H1 (cell line): ENCODE measurements at regions of chr6 and their contacts with region 1.

Region 1: DNA sequence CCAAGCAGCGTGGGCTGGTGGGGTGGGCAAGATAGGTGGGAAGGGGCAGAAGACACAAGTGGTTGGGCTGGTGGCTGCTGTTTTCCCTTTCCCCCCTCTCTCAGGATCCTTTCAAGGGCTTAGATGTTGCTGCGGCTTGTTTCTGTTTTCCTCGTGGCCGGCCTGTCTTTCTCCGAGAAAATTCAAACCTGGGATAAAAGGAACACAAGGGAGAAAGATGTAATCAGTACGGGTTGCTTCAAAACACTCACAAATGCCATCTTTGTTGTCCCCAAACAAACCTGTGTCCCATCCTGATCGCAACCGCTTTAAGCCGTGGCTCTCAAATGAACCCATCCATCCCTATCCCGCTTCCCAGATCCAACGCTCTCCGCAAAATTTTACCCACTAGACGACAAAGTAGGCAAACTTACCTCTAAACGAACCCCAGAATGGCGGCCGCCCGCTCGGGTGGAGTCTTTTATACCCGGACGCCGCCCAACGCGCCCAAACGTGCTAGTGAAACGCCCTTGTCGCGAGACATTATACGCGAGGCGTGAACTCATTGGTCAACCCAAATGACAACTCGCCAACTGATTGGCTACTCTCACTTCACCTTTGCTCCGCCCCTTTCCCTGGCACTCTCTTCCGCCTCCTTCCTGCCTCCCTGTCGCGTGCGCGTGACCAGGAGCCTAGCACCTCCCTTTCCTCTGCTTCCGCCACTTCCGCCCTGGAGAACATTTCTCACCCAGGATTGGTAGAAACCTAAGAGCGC is at the start of gene PPP1R10:
- DNase-seq: peak; percentile 99
- H3K4me3 ChIP-seq: peak within 1 kb of the TSS; percentile 90 to 97 (median 96)
- H3K27ac ChIP-seq: peak within 1 kb of the TSS; percentile 99
- H3K4me1 ChIP-seq: peaks cover 0 to 6% (median 4%) of the 10 kb centered on the region in 4 experiments; a peak in 4 of 7 replicates
- H3K27me3 ChIP-seq: no peaks in the 10 kb centered on the region
- CTCF ChIP-seq: no peak
- EP300 ChIP-seq: peak in 1 of 2 experiments; percentile 2; a peak in 1 of 3 replicates
- POLR2A ChIP-seq: peak; percentile 98 to 100
- RAD21 ChIP-seq: no peak
- total RNA-seq, gene PPP1R10: 78.9 and 89.1 TPM in 2 replicates

Region 2: GRCh38 chr6:30470968-30471367 is 146.0 kb before region 1 on chr6:
- CTCF ChIA-PET with region 1: no interaction called
- POLR2A ChIA-PET with region 1: no interaction called
- DNase-seq: no peak
- H3K4me3 ChIP-seq: no peak overlapping the region
- H3K27ac ChIP-seq: no peak overlapping the region
- H3K4me1 ChIP-seq: no peaks in the 10 kb centered on the region
- H3K27me3 ChIP-seq: peaks cover 8 to 21% (median 19%) of the 10 kb centered on the region in 4 experiments
- CTCF ChIP-seq: no peak
- EP300 ChIP-seq: no peak
- POLR2A ChIP-seq: no peak
- RAD21 ChIP-seq: no peak

Region 3: DNA sequence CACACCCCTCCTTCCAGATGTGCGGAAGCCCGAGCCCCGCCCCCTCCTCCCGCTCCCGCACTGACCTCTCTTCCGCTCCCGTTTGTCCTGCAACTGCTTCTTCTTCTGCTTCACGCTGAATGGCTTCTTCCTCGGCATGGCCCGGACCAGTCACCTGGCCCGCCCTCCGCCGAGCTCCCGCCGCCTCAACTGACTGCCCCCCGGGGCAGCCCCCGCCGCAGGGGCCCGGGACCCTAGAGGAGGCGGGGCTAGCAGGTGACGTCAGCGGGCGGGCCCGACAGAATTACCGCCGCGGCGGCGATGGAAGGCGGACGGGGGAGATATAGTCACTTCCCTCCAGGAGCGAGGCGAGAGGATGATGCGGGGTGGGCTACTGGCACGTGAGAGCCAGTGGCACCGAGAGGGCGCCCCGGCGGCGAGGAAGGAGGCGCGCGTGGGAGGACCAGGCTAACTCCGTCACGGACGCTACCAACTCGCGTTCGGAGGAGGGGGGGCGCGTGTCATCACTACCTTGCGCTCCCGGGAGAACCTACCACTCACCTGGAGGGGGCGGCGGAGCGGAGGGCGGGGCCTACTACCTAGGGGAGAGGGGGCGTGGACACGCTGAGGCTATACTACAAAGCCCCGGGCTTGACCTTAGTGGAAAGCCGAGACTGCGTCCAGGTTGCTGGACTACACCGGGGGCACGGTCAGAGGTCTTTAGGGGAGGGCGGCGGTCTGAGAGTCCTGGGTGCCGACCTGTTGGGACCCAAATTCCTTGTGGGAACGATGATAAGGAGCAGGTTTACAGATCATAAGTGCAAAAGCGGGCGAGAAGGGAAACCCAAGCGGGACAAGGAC is 60.7 kb before region 1 on chr6 and contains the start of gene GNL1:
- CTCF ChIA-PET with region 1: no interaction called
- POLR2A ChIA-PET with region 1: interaction called, 43 read pairs
- DNase-seq: peak; percentile 90 to 98
- H3K4me3 ChIP-seq: peak within 1 kb of the TSS; percentile 76 to 91 (median 89)
- H3K27ac ChIP-seq: peak within 1 kb of the TSS; percentile 93
- H3K4me1 ChIP-seq: peaks cover 0 to 3% (median 1%) of the 10 kb centered on the region in 4 experiments; a peak in 1 of 7 replicates
- H3K27me3 ChIP-seq: no peaks in the 10 kb centered on the region
- CTCF ChIP-seq: no peak
- EP300 ChIP-seq: peak in 1 of 2 experiments; percentile 99; a peak in 2 of 3 replicates
- POLR2A ChIP-seq: no peak
- RAD21 ChIP-seq: no peak
- total RNA-seq, gene GNL1: 67.8 and 75.4 TPM in 2 replicates

Region 4: GRCh38 chr6:30578051-30578450 is 38.9 kb before region 1 on chr6:
- CTCF ChIA-PET with region 1: interaction called, 3 read pairs
- POLR2A ChIA-PET with region 1: interaction called, 36 read pairs
- DNase-seq: no peak
- H3K4me3 ChIP-seq: no peak overlapping the region
- H3K27ac ChIP-seq: no peak overlapping the region
- H3K4me1 ChIP-seq: no peaks in the 10 kb centered on the region
- H3K27me3 ChIP-seq: no peaks in the 10 kb centered on the region
- CTCF ChIP-seq: no peak
- EP300 ChIP-seq: no peak
- POLR2A ChIP-seq: no peak
- RAD21 ChIP-seq: no peak

Region 5: DNA sequence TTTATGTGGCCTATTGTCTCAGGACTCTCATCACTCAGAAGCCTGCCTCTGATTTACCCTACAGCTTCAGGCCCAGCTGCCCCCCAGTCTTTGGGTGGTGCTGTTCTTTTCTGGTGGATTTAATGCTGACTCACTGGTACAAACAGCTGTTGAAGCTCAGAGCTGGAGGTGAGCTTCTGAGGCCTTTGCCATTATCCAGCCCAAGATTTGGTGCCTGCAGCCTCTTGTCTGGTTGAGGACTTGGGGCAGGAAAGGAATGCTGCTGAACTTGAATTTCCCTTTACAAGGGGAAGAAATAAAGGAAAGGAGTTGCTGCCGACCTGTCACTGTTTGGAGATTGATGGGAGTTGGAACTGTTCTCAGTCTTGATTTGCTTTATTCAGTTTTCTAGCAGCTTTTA is 26.0 kb before region 1 on chr6:
- CTCF ChIA-PET with region 1: interaction called, 17 read pairs
- POLR2A ChIA-PET with region 1: interaction called, 443 read pairs
- DNase-seq: no peak
- H3K4me3 ChIP-seq: no peak overlapping the region
- H3K27ac ChIP-seq: no peak overlapping the region
- H3K4me1 ChIP-seq: no peaks in the 10 kb centered on the region
- H3K27me3 ChIP-seq: no peaks in the 10 kb centered on the region
- CTCF ChIP-seq: no peak
- EP300 ChIP-seq: no peak
- POLR2A ChIP-seq: no peak
- RAD21 ChIP-seq: no peak

Region 6: DNA sequence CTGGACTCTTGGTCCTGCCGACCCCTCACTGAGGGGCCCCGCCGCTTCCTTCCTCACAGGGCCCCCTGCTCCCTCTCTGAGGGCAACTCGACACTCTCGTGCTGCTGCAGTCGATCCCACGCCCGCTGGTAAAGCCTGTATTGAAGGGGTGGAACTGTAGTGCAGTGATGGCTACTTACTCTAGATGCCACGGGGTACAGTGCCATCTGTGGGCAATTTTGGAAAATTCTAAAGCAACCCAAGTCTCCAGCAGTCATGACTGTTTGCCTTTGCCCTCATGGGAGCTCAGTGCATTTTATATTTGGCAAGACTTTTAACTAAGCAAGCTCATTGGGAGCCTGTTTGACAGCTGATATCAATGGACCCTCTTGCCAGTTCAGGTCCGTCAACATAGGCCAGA is 23.5 kb after region 1 on chr6:
- CTCF ChIA-PET with region 1: interaction called, 3 read pairs
- POLR2A ChIA-PET with region 1: interaction called, 27 read pairs
- DNase-seq: no peak
- H3K4me3 ChIP-seq: no peak overlapping the region
- H3K27ac ChIP-seq: no peak overlapping the region
- H3K4me1 ChIP-seq: no peaks in the 10 kb centered on the region
- H3K27me3 ChIP-seq: no peaks in the 10 kb centered on the region
- CTCF ChIP-seq: no peak
- EP300 ChIP-seq: no peak
- POLR2A ChIP-seq: no peak
- RAD21 ChIP-seq: no peak

Region 7: GRCh38 chr6:30672445-30673253 is 55.7 kb after region 1 on chr6 and contains the start of gene DHX16:
- CTCF ChIA-PET with region 1: interaction called, 6 read pairs
- POLR2A ChIA-PET with region 1: interaction called, 18 read pairs
- DNase-seq: peak; percentile 88 to 94
- H3K4me3 ChIP-seq: peak within 1 kb of the TSS; percentile 76 to 99 (median 90)
- H3K27ac ChIP-seq: no peak within 1 kb of the TSS
- H3K4me1 ChIP-seq: no peaks in the 10 kb centered on the region; a peak in 1 of 7 replicates
- H3K27me3 ChIP-seq: no peaks in the 10 kb centered on the region
- CTCF ChIP-seq: peak; percentile 50 to 80 (median 72)
- EP300 ChIP-seq: 0 out of 3 replicates have a peak, but pooled peaks of 1 of the 2 experiments have one; percentile 32
- POLR2A ChIP-seq: no peak
- RAD21 ChIP-seq: peak; percentile 19 to 42; a peak in 2 of 4 replicates
- total RNA-seq, gene DHX16: 27.4 and 29.4 TPM in 2 replicates

Region 8: GRCh38 chr6:30717042-30717844 is 100.3 kb after region 1 on chr6 and contains the start of gene MDC1:
- CTCF ChIA-PET with region 1: interaction called, 3 read pairs
- POLR2A ChIA-PET with region 1: interaction called, 115 read pairs
- DNase-seq: peak; percentile 92 to 99
- H3K4me3 ChIP-seq: peak within 1 kb of the TSS; percentile 63 to 100 (median 82)
- H3K27ac ChIP-seq: peak within 1 kb of the TSS; percentile 94
- H3K4me1 ChIP-seq: peaks cover 0 to 2% (median 0%) of the 10 kb centered on the region in 4 experiments; a peak in 6 of 7 replicates
- H3K27me3 ChIP-seq: no peaks in the 10 kb centered on the region
- CTCF ChIP-seq: peak in 1 of 3 experiments; percentile 15; a peak in 1 of 4 replicates
- EP300 ChIP-seq: peak in 1 of 2 experiments; percentile 91; a peak in 2 of 3 replicates
- POLR2A ChIP-seq: peak; percentile 90 to 97
- RAD21 ChIP-seq: peak in 1 of 2 experiments; percentile 15; a peak in 1 of 4 replicates
- total RNA-seq, gene MDC1: 68.0 and 81.1 TPM in 2 replicates

Region 9: DNA sequence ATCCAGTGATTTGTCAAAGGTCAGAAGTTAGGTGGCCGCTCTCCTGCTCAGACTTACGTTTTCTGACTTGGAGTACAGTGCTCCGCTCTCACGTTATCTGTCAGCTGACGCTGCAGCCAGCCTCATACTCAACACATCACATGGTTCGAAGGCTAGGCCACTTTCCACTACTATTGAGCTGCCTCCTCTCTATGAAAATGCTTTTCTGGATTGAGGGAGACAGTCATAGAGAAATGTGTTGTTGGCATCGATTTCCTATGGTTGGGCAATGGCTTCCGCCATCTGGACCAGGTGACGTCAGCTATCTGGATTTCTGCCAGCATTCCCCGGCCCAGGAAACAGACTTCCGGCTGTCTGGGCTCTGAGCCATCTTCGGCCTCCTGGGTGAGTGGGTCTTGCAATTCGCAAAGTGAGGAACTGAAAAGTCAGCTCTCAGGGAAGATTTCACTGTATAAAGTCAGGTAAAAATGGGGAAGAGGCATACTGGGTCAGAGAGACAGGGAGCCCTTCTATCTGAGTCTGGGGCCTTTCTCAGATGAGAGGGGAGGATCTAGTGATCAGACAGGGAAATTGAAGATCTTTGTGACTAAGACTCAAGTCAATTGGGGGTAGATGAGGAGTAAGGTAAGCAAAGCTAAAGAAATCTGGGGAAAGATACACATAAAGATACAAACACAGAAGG is 164.9 kb after region 1 on chr6:
- CTCF ChIA-PET with region 1: no interaction called
- POLR2A ChIA-PET with region 1: no interaction called
- DNase-seq: no peak
- H3K4me3 ChIP-seq: no peak overlapping the region
- H3K27ac ChIP-seq: no peak overlapping the region
- H3K4me1 ChIP-seq: no peaks in the 10 kb centered on the region
- H3K27me3 ChIP-seq: 0 out of 7 replicates have a peak, but pooled peaks cover 0 to 3% (median 0%) of the 10 kb centered on the region in 4 experiments
- CTCF ChIP-seq: no peak
- EP300 ChIP-seq: no peak
- POLR2A ChIP-seq: no peak
- RAD21 ChIP-seq: no peak